ENCODE measurements at regions of chr15 and their contacts with region 1.

Region 1: DNA sequence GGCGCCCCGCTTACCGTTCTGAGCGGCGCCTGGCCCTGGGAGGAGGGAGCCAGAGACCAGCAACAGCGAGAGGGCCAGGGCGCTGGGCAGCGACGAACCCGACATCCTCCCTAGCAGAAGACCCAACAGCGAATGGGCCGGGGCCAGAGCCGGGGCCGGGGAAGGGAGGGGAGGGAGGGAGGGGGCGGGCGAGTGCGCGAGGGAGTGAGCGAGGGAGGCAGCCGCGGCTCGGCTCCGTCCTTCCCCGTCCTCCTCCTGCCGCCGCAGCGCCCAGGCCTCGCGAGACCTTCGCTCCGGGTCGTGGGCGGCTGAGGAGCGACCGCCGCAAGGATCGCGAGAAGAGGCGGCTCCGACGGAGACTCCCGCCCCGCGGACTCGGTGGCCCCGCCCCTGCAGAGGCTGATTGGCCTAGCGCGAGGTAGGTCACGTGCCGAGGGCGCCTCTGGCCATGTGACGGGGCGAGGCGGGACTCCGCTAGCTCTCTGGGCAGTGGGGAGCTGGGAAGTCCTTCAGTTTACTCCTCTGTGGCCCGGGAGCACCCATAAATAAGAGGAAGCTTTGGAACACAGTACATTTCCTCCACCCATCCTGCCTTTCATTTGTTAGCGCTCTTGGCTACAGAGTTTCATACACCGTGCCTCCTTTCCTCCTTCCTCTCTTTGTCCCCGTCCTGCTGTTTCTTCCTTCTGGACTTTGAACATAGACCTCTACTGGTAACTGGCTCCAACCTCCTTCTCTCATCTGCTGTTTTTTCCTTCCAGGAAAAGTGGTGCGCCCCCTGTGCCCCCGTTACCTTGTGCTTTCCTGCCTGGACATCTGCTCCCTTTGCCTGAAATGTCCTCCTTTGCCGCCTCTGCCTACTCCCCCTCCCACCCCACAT is at the start of gene NPTN:
- DNase-seq: peak; percentile 99 to 100 (median 99)
- ATAC-seq: peak; percentile 93 to 96 (median 94)
- H3K4me3 ChIP-seq: peak within 1 kb of the TSS; percentile 83 to 100 (median 91)
- H3K27ac ChIP-seq: peak within 1 kb of the TSS; percentile 83 to 100 (median 96)
- H3K4me1 ChIP-seq: peaks cover 3 to 57% (median 41%) of the 10 kb centered on the region in 12 donors
- H3K27me3 ChIP-seq: no peaks in the 10 kb centered on the region
- CTCF ChIP-seq: peak in 1 of 12 donors; percentile 17
- POLR2A ChIP-seq: peak in 1 of 2 donors; percentile 83
- total RNA-seq, gene NPTN: 166 to 264 (median 205) TPM

Region 2: GRCh38 chr15:73560501-73561117 is 72.7 kb before region 1 on chr15:
- intact Hi-C with region 1: loop called (anchors 1 to 5 kb)
- DNase-seq: no peak
- ATAC-seq: peak in 1 of 4 donors; percentile 49
- H3K4me3 ChIP-seq: no peak overlapping the region
- H3K27ac ChIP-seq: peak overlapping the region in 1 of 12 donors; percentile 2
- H3K4me1 ChIP-seq: peaks cover 0 to 15% (median 3%) of the 10 kb centered on the region in 12 donors
- H3K27me3 ChIP-seq: no peaks in the 10 kb centered on the region
- CTCF ChIP-seq: peak; percentile 16 to 70 (median 54)
- POLR2A ChIP-seq: no peak

Region 3: GRCh38 chr15:73593304-73594074 is 39.9 kb before region 1 on chr15:
- intact Hi-C with region 1: loop called in 7 of 10 experiments (anchors 5 kb)
- DNase-seq: peak in 3 of 5 donors; percentile 38 to 59 (median 57)
- ATAC-seq: peak in 2 of 4 donors; percentile 44 to 48
- H3K4me3 ChIP-seq: no peak overlapping the region
- H3K27ac ChIP-seq: no peak overlapping the region
- H3K4me1 ChIP-seq: peaks cover 0 to 69% (median 51%) of the 10 kb centered on the region in 12 donors
- H3K27me3 ChIP-seq: no peaks in the 10 kb centered on the region
- CTCF ChIP-seq: no peak
- POLR2A ChIP-seq: no peak

Region 4: GRCh38 chr15:73683777-73684580 is 50.6 kb after region 1 on chr15 and contains the start of gene CD276:
- intact Hi-C with region 1: loop called in 3 of 10 experiments (anchors 5 to 10 kb)
- DNase-seq: peak; percentile 81 to 89 (median 87)
- ATAC-seq: peak; percentile 53 to 90 (median 87)
- H3K4me3 ChIP-seq: peak within 1 kb of the TSS; percentile 66 to 99 (median 80)
- H3K27ac ChIP-seq: peak within 1 kb of the TSS; percentile 70 to 93 (median 84)
- H3K4me1 ChIP-seq: peaks cover 2 to 57% (median 38%) of the 10 kb centered on the region in 12 donors
- H3K27me3 ChIP-seq: peaks cover 0 to 12% (median 0%) of the 10 kb centered on the region in 9 donors
- CTCF ChIP-seq: peak in 3 of 12 donors; percentile 7 to 23 (median 11)
- POLR2A ChIP-seq: no peak
- total RNA-seq, gene CD276: 32.0 to 127 (median 53.3) TPM

Region 5: DNA sequence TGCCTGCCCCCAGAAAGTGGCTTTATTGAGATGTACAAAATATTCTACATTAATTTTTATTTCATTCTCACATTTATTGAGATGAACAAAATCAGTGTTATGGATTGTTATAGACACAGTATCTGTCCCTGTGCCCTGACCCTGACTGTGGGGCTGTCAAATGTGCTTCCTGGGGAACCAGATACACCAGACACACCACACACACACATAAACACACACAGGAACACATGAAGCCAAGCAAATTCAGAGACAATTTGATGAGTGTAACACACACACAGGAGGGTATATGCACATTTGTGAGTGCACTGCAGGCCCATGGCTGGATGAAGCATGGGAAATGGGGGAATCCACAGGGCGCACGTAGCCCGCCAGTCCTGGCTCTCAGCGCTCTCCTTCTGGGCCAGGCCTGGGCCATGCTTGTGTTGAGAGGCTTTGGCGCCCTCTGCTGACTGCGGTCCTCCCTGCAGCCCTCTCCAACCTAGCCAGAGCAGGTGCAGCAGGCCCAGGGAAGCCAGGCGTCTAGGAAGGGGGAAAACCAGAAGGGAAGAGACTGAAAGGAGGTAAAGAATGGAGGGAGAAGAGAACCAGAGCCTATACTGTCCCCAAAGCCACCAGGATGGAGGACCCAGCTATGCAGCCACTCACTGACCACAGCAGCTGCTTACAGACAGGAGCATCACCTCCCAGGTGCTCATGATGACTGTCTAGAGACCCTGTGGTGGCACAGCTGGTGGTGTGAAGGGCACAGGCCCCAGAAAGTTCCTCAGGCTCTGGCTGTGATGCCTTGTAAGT is 274.9 kb after region 1 on chr15:
- intact Hi-C with region 1: loop called in 1 of 10 experiments (anchors 5 kb)
- DNase-seq: peak; percentile 76 to 89 (median 87)
- ATAC-seq: peak; percentile 91 to 97 (median 96)
- H3K4me3 ChIP-seq: no peak overlapping the region
- H3K27ac ChIP-seq: no peak overlapping the region
- H3K4me1 ChIP-seq: peaks cover 0 to 17% (median 5%) of the 10 kb centered on the region in 12 donors
- H3K27me3 ChIP-seq: no peaks in the 10 kb centered on the region
- CTCF ChIP-seq: peak; percentile 82 to 95 (median 91)
- POLR2A ChIP-seq: no peak

Measured in heart left ventricle (tissue), 16 donors.